Naive thymus-derived CD4-positive, alpha-beta T cell (primary cell): ENCODE measurements at regions of chr1 and their contacts with region 1.

Region 1: GRCh38 chr1:33086384-33086850 is 5.5 kb downstream of the AZIN2 start:
- DNase-seq: peak in 2 of 9 donors; percentile 29 to 50
- ATAC-seq: peak; percentile 63
- H3K4me3 ChIP-seq: no peak overlapping the region
- H3K4me3 Mint-ChIP-seq: no peak overlapping the region
- H3K27ac ChIP-seq: no peak overlapping the region
- H3K27ac Mint-ChIP-seq: peak overlapping the region in 3 of 9 donors; percentile 18 to 48 (median 44)
- H3K4me1 ChIP-seq: peaks cover 10 to 19% of the 10 kb centered on the region in 2 donors
- H3K4me1 Mint-ChIP-seq: peaks cover 24 to 61% (median 47%) of the 10 kb centered on the region in 7 donors
- H3K27me3 ChIP-seq: no peaks in the 10 kb centered on the region
- H3K27me3 Mint-ChIP-seq: peaks cover 0 to 28% (median 0%) of the 10 kb centered on the region in 5 donors

Region 2: DNA sequence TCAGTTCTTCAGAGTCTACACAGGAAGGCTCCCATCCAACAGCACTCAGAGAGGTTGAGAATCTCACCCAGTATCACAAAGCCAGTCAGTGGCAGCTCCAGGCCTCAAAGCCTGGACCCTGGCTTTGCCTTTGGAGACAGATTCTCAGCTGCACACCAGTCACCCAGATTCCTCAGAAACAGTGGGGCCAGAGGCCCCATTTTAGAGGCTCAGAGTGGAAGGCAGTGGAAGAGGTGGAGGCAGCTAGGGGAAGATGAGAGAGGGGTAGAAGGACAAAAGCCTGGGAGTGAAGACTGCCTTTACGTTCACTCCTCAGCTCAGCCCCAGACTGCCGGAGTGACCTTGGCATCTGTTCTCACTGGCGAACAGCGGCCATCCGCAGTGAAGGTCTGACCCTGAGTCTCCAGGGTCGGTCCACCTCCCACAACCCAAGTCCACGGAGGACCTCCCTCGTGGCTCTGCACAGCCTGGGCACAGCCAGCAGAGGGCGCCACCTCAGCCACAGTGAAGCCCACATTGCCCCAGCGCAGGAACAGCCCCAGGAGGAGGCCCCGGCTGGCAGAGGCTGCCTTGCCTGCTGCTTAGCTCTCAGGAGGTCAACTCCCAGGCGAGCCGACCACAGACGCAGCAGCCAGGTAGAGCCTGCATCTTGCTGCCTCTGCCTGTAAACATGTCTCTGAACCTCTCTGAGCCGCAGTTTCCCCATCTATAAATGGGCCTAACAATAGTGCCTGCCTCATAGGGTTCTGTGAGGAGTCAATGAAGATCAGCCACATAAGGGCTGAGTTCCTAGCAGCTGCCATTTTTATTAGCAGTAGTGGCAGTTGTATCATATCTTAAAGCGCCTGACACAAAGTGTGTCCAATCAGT is 209.8 kb before region 1 on chr1:
- CTCF ChIA-PET with region 1: no interaction called
- POLR2A ChIA-PET with region 1: no interaction called
- intact Hi-C with region 1: loop called in 1 of 2 experiments (anchors 1 kb)
- DNase-seq: peak; percentile 22 to 76 (median 39)
- ATAC-seq: peak; percentile 88
- H3K4me3 ChIP-seq: no peak overlapping the region
- H3K4me3 Mint-ChIP-seq: no peak overlapping the region
- H3K27ac ChIP-seq: no peak overlapping the region
- H3K27ac Mint-ChIP-seq: no peak overlapping the region
- H3K4me1 ChIP-seq: peaks cover 0 to 2% of the 10 kb centered on the region in 2 donors
- H3K4me1 Mint-ChIP-seq: peaks cover 0 to 12% (median 3%) of the 10 kb centered on the region in 7 donors
- H3K27me3 ChIP-seq: peaks cover 3 to 7% of the 10 kb centered on the region in 2 donors
- H3K27me3 Mint-ChIP-seq: peaks cover 36 to 45% (median 37%) of the 10 kb centered on the region in 5 donors